A673 (cell line): ENCODE measurements at regions of chr15 and their contacts with region 1.

Region 1: GRCh38 chr15:60172143-60172542 is 168.0 kb downstream of the FOXB1 start:
- DNase-seq: peak; percentile 59
- H3K4me3 ChIP-seq: no peak overlapping the region
- H3K27ac ChIP-seq: no peak overlapping the region
- H3K4me1 ChIP-seq: peaks cover 15% of the 10 kb centered on the region
- H3K27me3 ChIP-seq: peaks cover 11% of the 10 kb centered on the region
- CTCF ChIP-seq: no peak

Region 2: GRCh38 chr15:60285741-60286140 is 113.6 kb after region 1 on chr15:
- CTCF ChIA-PET with region 1: interaction called, 10 read pairs
- POLR2A ChIA-PET with region 1: no interaction called
- intact Hi-C with region 1: no loop called
- DNase-seq: no peak
- H3K4me3 ChIP-seq: no peak overlapping the region
- H3K27ac ChIP-seq: no peak overlapping the region
- H3K4me1 ChIP-seq: no peaks in the 10 kb centered on the region
- H3K27me3 ChIP-seq: peaks cover 57% of the 10 kb centered on the region
- CTCF ChIP-seq: no peak